ENCODE measurements at regions of chr20 and their contacts with region 1.

Region 1: GRCh38 chr20:8722276-8722928 is 346.5 kb upstream of the PLCB4 start:
- DNase-seq: peak in 3 of 9 experiments; percentile 24 to 70 (median 64)
- ATAC-seq: no peak
- H3K4me3 ChIP-seq: no peak overlapping the region
- H3K4me3 Mint-ChIP-seq: no peak overlapping the region
- H3K27ac ChIP-seq: no peak overlapping the region
- H3K27ac Mint-ChIP-seq: no peak overlapping the region
- H3K4me1 ChIP-seq: no peaks in the 10 kb centered on the region
- H3K4me1 Mint-ChIP-seq: no peaks in the 10 kb centered on the region
- H3K27me3 ChIP-seq: no peaks in the 10 kb centered on the region
- H3K27me3 Mint-ChIP-seq: no peaks in the 10 kb centered on the region
- CTCF ChIP-seq: peak; percentile 68

Region 2: DNA sequence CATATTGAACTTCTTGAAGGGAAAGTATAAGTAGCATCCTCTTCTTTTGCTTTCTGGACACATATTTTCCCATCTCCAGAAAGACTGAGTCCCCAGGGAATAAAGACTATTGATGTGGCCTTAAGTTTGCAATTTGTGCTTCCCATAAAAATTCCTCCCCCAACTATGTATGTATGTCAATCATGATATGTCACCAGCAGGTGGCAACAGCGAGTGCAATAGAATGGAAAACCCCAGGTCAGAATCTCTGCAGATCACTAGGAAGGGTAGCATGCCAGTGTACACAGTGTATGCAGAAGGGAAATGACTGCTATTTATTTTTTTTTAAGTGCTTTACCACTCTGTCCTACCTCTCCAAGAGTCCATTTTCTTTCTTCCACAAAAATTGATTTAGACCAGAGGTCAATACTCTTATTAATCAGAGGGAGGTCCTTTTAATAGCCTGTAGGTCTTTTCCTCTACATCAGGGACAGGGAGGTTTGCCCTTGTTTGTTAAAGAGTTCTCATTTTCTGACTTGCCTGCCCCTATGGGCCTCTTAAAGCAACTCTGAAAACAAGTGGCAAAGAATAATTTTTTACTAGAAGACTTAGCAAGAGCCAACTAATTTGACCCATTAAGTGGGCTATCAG is 1893.5 kb before region 1 on chr20:
- CTCF ChIA-PET with region 1: interaction called, 5 read pairs
- POLR2A ChIA-PET with region 1: no interaction called
- intact Hi-C with region 1: loop called (anchors 2 to 5 kb)
- DNase-seq: peak in 4 of 9 experiments; percentile 7 to 27 (median 11)
- ATAC-seq: no peak
- H3K4me3 ChIP-seq: no peak overlapping the region
- H3K4me3 Mint-ChIP-seq: no peak overlapping the region
- H3K27ac ChIP-seq: no peak overlapping the region
- H3K27ac Mint-ChIP-seq: no peak overlapping the region
- H3K4me1 ChIP-seq: no peaks in the 10 kb centered on the region
- H3K4me1 Mint-ChIP-seq: no peaks in the 10 kb centered on the region
- H3K27me3 ChIP-seq: no peaks in the 10 kb centered on the region
- H3K27me3 Mint-ChIP-seq: no peaks in the 10 kb centered on the region
- CTCF ChIP-seq: no peak

Region 3: DNA sequence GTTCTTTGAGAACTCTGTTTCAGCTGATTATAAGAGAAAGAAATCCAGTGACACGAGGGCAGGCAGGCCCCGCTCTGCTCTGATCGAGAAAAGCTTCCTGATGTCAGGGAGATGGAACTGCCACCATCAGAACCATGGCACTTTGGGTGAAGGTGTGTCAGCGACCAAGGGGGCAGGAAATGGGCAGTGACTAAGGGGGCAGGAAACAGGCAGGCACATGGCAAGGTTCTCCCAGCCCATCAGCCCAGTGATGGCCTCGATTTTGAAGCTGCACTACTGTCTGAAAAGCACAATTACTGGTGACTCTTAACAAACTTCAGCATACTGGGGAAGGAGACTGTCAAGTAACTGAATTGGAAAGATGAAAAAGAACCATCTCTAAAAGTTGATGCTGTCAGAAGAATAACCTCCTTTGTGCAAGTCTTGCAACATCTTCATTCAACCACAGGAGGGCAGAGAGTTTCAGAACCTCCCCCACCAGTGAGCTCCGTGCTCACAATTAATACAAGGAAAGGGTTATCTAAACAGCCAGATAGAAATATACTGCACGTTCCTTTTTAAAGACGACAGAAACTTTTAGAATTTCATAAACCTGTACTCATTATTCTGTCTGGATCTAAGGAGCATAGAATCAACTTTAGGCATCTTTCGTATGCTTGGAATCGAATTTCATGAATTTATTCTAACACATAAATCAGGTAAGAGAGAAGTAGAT is 741.9 kb before region 1 on chr20:
- CTCF ChIA-PET with region 1: interaction called, 4 read pairs
- POLR2A ChIA-PET with region 1: no interaction called
- intact Hi-C with region 1: loop called in 1 of 2 experiments (anchors 5 kb)
- DNase-seq: peak in 2 of 9 experiments; percentile 23 to 31
- ATAC-seq: no peak
- H3K4me3 ChIP-seq: no peak overlapping the region
- H3K4me3 Mint-ChIP-seq: no peak overlapping the region
- H3K27ac ChIP-seq: no peak overlapping the region
- H3K27ac Mint-ChIP-seq: peak overlapping the region; percentile 39
- H3K4me1 ChIP-seq: no peaks in the 10 kb centered on the region
- H3K4me1 Mint-ChIP-seq: peaks cover 15% of the 10 kb centered on the region
- H3K27me3 ChIP-seq: no peaks in the 10 kb centered on the region
- H3K27me3 Mint-ChIP-seq: no peaks in the 10 kb centered on the region
- CTCF ChIP-seq: peak; percentile 24

Region 4: GRCh38 chr20:8131598-8132483 is 590.6 kb before region 1 on chr20 and contains the start of gene PLCB1:
- CTCF ChIA-PET with region 1: interaction called, 6 read pairs
- POLR2A ChIA-PET with region 1: no interaction called
- intact Hi-C with region 1: loop called (anchors 1 kb)
- DNase-seq: peak; percentile 53 to 93 (median 77)
- ATAC-seq: peak; percentile 90
- H3K4me3 ChIP-seq: peak within 1 kb of the TSS; percentile 55 to 61
- H3K4me3 Mint-ChIP-seq: peak within 1 kb of the TSS; percentile 80
- H3K27ac ChIP-seq: no peak within 1 kb of the TSS
- H3K27ac Mint-ChIP-seq: no peak within 1 kb of the TSS
- H3K4me1 ChIP-seq: peaks cover 10% of the 10 kb centered on the region
- H3K4me1 Mint-ChIP-seq: peaks cover 24% of the 10 kb centered on the region
- H3K27me3 ChIP-seq: no peaks in the 10 kb centered on the region
- H3K27me3 Mint-ChIP-seq: peaks cover 3% of the 10 kb centered on the region
- CTCF ChIP-seq: peak; percentile 50
- total RNA-seq, gene PLCB1: 4.6 to 5.0 TPM

Region 5: DNA sequence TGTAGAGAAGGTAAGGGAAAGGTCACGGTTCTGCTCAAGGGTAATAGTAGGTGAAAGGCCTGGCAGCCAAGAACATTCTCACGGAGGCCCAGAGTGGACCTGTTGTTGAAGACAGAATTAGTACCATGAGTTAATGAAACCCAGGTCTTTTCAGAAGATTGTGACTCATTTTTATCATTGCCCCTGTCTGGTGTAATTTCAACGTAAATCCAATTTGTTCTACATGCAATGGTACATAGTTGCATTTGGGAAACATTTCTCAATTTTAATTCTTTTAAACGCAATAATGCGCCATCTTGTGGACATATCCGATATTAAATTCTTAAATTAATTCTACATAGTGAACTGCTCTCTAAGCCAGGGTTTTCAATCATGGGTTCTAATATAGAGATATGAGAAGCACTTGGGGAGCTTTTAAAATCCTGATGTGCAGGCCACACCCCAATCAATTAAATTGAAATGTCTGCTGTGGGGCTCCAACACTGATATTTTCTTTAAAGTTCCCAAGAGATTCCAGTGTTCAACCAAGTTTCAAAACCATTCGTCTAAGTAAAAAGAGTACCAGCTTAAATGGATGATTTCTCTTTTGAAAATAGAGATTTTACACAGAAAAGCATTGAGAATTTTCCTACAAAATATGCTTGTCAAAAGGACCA is 332.9 kb before region 1 on chr20:
- CTCF ChIA-PET with region 1: interaction called, 5 read pairs
- POLR2A ChIA-PET with region 1: no interaction called
- intact Hi-C with region 1: loop called in 1 of 2 experiments (anchors 10 kb)
- DNase-seq: peak in 2 of 9 experiments; percentile 52 to 62
- ATAC-seq: peak; percentile 34
- H3K4me3 ChIP-seq: no peak overlapping the region
- H3K4me3 Mint-ChIP-seq: no peak overlapping the region
- H3K27ac ChIP-seq: no peak overlapping the region
- H3K27ac Mint-ChIP-seq: no peak overlapping the region
- H3K4me1 ChIP-seq: no peaks in the 10 kb centered on the region
- H3K4me1 Mint-ChIP-seq: peaks cover 3% of the 10 kb centered on the region
- H3K27me3 ChIP-seq: no peaks in the 10 kb centered on the region
- H3K27me3 Mint-ChIP-seq: no peaks in the 10 kb centered on the region
- CTCF ChIP-seq: peak; percentile 74

Region 6: DNA sequence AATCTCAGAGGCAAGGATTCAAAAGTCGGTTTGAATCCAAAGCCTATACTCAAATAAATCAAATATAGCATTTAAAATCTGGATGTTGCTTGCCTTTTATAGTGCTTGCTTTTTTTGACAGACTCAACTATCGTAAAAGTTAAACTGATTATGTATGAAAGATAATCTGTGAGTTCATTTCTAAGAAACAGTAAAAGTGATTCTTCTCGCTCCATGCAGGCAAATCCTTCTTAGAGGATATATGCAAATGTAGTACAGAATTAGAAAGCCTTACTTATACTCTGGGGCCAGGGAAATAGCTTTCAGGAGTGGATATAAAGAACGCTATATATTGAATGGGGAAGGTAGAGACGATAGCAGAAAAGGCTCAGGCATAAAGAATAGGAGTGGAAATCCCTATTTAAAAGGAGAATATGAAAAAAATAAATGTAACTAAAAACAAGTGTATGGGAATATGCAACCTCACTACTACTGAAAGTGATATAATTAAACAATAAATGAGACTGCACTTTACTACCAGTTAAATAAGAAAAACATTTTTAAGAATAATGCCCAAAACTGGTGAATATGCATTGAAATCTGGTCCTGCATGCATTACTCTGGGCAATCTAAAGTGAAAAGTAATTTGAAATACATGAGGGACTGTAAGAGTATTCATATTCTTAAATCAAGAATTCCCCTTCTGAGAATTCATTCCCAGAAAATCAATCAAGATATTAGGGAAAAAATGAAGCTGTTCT is 15.3 kb before region 1 on chr20:
- CTCF ChIA-PET with region 1: interaction called, 22 read pairs
- POLR2A ChIA-PET with region 1: no interaction called
- intact Hi-C with region 1: no loop called
- DNase-seq: no peak
- ATAC-seq: no peak
- H3K4me3 ChIP-seq: no peak overlapping the region
- H3K4me3 Mint-ChIP-seq: no peak overlapping the region
- H3K27ac ChIP-seq: no peak overlapping the region
- H3K27ac Mint-ChIP-seq: no peak overlapping the region
- H3K4me1 ChIP-seq: no peaks in the 10 kb centered on the region
- H3K4me1 Mint-ChIP-seq: no peaks in the 10 kb centered on the region
- H3K27me3 ChIP-seq: no peaks in the 10 kb centered on the region
- H3K27me3 Mint-ChIP-seq: no peaks in the 10 kb centered on the region
- CTCF ChIP-seq: no peak

Measured in CD8-positive, alpha-beta T cell (primary cell).